Right cardiac atrium (tissue), 5 donors: ENCODE measurements at regions of chr15 and their contacts with region 1.

Region 1: GRCh38 chr15:74036271-74037170 is 42.0 kb downstream of the PML start:
- DNase-seq: peak; percentile 65 to 86 (median 77)
- ATAC-seq: peak; percentile 12 to 26
- H3K4me3 ChIP-seq: no peak overlapping the region
- H3K27ac ChIP-seq: no peak overlapping the region
- H3K4me1 ChIP-seq: peaks cover 11% of the 10 kb centered on the region
- H3K27me3 ChIP-seq: no peaks in the 10 kb centered on the region

Region 2: GRCh38 chr15:73818308-73818985 is 218.1 kb before region 1 on chr15:
- intact Hi-C with region 1: no loop called
- DNase-seq: no peak
- ATAC-seq: no peak
- H3K4me3 ChIP-seq: no peak overlapping the region
- H3K27ac ChIP-seq: no peak overlapping the region
- H3K4me1 ChIP-seq: no peaks in the 10 kb centered on the region
- H3K27me3 ChIP-seq: no peaks in the 10 kb centered on the region

Region 3: DNA sequence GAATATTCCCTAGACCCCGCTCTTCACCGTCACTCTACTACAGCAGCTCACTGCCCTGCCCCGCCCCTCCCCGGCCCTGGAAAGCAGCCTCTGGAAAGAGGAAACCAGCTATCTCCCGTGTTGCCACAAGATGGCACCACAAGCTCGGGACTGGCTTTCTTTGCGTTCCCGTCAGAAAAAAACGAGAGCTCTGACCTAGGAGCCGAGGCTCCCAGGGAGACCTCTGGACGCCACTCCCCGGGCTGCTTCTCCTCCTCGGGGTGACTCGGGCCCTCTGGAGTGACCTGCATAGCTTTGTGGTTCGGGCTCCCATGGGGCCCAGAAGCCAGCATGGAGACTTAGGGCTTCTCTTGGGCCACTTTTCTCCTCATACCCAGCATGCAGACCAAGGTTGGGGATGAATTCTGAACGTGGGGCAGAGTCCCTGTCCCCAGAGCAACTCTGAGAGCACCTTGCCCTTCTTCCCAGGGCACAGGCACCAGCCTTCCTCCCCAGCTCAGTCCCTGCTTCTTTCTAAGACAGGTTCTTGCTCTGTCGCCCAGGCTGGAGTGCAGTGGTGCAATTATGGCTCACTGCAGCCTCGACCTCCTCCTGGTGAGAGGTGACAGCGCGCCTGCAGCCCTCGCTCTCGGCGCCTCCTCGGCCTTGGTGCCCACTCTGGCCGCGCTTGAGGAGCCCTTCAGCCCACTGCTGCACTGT is 63.4 kb before region 1 on chr15:
- intact Hi-C with region 1: loop called in 3 of 4 experiments (anchors 5 to 10 kb)
- DNase-seq: peak; percentile 86 to 95 (median 92)
- ATAC-seq: peak; percentile 90 to 93
- H3K4me3 ChIP-seq: no peak overlapping the region
- H3K27ac ChIP-seq: no peak overlapping the region
- H3K4me1 ChIP-seq: no peaks in the 10 kb centered on the region
- H3K27me3 ChIP-seq: no peaks in the 10 kb centered on the region

Region 4: DNA sequence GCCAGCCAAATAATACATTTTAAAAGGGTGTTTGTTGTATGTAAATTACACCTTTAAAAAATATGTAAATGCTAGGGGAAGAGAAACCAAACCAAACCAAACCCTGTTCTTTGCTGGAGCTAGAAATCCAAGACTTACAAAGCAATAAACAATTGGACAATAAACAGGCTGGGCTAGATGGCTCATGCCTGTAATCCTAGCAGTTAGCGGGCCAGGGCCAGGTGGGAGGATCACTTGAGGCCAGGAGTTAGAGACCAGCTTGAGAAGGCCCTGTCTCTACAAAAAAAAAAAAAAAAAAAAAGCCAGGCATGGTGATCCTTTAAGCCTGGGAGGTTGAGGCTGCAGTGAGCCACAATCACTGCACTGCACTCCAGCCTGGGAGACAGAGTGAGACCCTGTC is 56.9 kb before region 1 on chr15:
- intact Hi-C with region 1: loop called in 3 of 4 experiments (anchors 5 to 10 kb)
- DNase-seq: no peak
- ATAC-seq: no peak
- H3K4me3 ChIP-seq: no peak overlapping the region
- H3K27ac ChIP-seq: no peak overlapping the region
- H3K4me1 ChIP-seq: peaks cover 21% of the 10 kb centered on the region
- H3K27me3 ChIP-seq: no peaks in the 10 kb centered on the region

Region 5: DNA sequence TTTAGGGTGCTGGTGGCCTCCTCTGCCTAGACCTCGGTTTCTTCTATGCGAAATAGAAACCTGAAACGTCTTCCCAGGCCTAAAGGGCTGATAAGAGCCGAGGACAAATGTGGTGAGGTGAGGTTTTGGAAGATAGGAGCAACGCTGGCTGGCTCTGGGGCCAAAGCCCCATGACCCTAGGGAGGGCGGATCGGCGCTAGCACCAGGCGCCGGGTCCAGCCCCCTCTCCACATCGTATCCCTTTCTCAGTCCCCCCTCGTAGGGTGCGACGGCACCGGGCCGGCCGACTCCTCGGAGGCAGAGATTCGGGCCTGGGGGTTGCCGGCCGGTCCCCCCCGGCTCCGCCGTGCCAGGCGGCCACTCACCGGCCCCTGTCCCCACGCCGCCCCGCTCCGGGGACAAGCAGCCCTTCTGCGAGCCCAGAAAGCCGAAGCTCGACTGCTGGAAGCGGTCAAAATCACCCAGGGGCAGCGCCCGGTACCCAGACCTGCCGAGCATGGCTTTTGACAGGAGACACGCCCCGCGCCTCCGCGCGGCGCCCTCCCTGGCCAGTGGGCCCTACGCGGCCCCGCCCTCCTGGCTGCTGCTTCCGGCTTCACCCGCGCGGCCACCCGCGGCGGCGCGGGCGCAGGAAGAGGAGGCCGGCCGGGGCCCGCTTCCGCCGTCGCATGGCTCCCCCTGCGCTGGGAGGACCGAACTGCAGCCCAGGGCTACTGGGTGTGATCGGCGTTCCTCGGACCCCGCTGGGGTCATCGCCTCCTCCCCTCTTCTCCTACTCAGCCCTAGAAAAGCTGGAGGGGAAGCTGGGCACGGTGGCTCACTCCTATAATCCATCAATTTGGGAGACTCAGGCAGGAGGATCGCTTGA is 44.6 kb before region 1 on chr15 and contains the start of gene STOML1:
- intact Hi-C with region 1: loop called in 1 of 4 experiments (anchors 5 kb)
- DNase-seq: peak; percentile 96 to 99 (median 98)
- ATAC-seq: peak; percentile 90 to 91
- H3K4me3 ChIP-seq: peak within 1 kb of the TSS; percentile 85
- H3K27ac ChIP-seq: peak within 1 kb of the TSS; percentile 93
- H3K4me1 ChIP-seq: peaks cover 15% of the 10 kb centered on the region
- H3K27me3 ChIP-seq: no peaks in the 10 kb centered on the region
- total RNA-seq, gene STOML1: 14.9 to 19.0 (median 17.8) TPM

Region 6: GRCh38 chr15:74127260-74127953 is 90.9 kb after region 1 on chr15:
- intact Hi-C with region 1: no loop called
- DNase-seq: peak; percentile 90 to 96 (median 96)
- ATAC-seq: peak; percentile 96
- H3K4me3 ChIP-seq: peak overlapping the region; percentile 39
- H3K27ac ChIP-seq: no peak overlapping the region
- H3K4me1 ChIP-seq: peaks cover 1% of the 10 kb centered on the region
- H3K27me3 ChIP-seq: no peaks in the 10 kb centered on the region